PC-3 (cell line): ENCODE measurements at regions of chr10 and their contacts with region 1.

Region 1: DNA sequence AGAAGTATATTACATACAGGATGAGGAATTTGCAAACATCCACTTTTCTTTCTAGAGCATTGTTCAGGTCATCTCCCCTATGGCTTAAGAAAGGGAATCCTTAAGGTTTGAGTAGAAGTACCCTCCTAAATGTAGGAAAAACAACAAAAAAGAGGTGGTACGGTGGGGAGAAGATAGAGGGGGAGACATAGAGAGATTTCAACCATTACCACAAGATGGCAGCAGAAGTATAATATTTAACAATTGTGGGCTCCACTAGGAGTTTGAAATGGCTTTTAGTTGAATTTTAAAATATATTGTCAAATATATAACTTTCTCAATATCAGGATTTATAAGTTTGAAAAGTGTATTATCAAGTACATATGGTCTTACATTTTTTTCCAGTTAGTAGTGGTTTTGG is 72.7 kb upstream of the PRKG1 start:
- DNase-seq: peak; percentile 85
- ATAC-seq: peak; percentile 87
- H3K4me3 ChIP-seq: no peak overlapping the region
- H3K27ac ChIP-seq: no peak overlapping the region
- H3K4me1 ChIP-seq: no peaks in the 10 kb centered on the region
- H3K27me3 ChIP-seq: peaks cover 73% of the 10 kb centered on the region
- CTCF ChIP-seq: peak; percentile 99

Region 2: DNA sequence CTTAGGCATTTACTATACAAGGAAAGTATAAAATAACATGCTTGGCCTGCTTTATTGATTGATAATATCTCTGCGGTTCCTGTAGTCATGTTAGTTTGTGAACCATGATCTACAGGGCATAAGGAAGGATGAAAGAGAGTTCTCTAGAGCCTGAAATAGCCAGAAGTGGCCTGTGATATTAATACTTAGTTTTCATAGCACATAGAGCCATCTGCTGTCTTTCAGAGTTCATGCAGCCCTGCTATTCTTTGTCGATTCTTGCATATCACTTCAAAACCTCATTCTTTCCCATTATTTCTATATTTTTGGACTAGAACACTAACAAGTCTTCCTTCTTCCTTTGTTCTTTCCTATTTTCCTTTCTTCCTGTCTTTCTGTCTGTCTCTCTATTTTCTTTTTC is 46.3 kb after region 1 on chr10:
- CTCF ChIA-PET with region 1: no interaction called
- POLR2A ChIA-PET with region 1: no interaction called
- intact Hi-C with region 1: loop called (anchors 2 kb)
- DNase-seq: peak; percentile 41
- ATAC-seq: peak; percentile 60
- H3K4me3 ChIP-seq: no peak overlapping the region
- H3K27ac ChIP-seq: no peak overlapping the region
- H3K4me1 ChIP-seq: no peaks in the 10 kb centered on the region
- H3K27me3 ChIP-seq: peaks cover 29% of the 10 kb centered on the region; the same call in 1 of the 2 replicates
- CTCF ChIP-seq: peak; percentile 58

Region 3: DNA sequence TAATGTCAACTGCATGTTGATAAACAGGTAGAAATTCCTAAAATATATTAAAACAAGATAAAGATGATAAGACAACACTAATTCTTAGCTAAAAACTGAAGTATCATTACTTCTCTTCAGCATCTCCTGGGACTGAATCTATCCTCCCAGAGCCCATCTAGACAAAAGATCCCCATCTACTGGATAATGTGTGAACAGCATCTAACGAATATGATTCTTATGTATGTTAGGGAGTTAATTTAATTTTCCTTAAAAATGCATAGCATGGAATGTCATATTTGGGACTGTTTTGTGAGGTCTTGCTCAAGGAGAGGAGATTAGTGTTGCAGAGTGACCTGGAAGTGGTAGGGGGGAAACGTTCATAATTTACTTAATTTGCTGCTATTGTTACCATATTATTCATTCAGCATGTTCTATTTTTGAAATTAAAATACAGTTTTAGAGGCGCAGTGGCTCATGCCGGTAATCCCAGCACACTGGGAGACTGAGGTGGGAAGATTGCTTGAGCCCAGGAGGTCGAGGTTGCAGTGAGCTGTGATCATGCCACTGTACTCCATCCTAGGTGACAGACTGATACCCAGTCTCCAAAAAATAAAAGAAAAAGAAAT is 1002.9 kb after region 1 on chr10:
- CTCF ChIA-PET with region 1: no interaction called
- POLR2A ChIA-PET with region 1: no interaction called
- intact Hi-C with region 1: loop called (anchors 2 kb)
- DNase-seq: peak; percentile 94
- ATAC-seq: peak; percentile 89
- H3K4me3 ChIP-seq: no peak overlapping the region
- H3K27ac ChIP-seq: no peak overlapping the region
- H3K4me1 ChIP-seq: no peaks in the 10 kb centered on the region
- H3K27me3 ChIP-seq: peaks cover 15% of the 10 kb centered on the region; the same call in 1 of the 2 replicates
- CTCF ChIP-seq: peak; percentile 96

Region 4: GRCh38 chr10:52308251-52309031 is 1306.9 kb after region 1 on chr10:
- CTCF ChIA-PET with region 1: no interaction called
- POLR2A ChIA-PET with region 1: no interaction called
- intact Hi-C with region 1: loop called (anchors 5 kb)
- DNase-seq: peak; percentile 94
- ATAC-seq: peak; percentile 86
- H3K4me3 ChIP-seq: peak overlapping the region; percentile 55
- H3K27ac ChIP-seq: 0 out of 2 replicates have a peak overlapping the region, but pooled peaks have one; percentile 2
- H3K4me1 ChIP-seq: peaks cover 36% of the 10 kb centered on the region
- H3K27me3 ChIP-seq: no peaks in the 10 kb centered on the region
- CTCF ChIP-seq: peak; percentile 99